ENCODE measurements at regions of chr14 and their contacts with region 1.

Region 1: DNA sequence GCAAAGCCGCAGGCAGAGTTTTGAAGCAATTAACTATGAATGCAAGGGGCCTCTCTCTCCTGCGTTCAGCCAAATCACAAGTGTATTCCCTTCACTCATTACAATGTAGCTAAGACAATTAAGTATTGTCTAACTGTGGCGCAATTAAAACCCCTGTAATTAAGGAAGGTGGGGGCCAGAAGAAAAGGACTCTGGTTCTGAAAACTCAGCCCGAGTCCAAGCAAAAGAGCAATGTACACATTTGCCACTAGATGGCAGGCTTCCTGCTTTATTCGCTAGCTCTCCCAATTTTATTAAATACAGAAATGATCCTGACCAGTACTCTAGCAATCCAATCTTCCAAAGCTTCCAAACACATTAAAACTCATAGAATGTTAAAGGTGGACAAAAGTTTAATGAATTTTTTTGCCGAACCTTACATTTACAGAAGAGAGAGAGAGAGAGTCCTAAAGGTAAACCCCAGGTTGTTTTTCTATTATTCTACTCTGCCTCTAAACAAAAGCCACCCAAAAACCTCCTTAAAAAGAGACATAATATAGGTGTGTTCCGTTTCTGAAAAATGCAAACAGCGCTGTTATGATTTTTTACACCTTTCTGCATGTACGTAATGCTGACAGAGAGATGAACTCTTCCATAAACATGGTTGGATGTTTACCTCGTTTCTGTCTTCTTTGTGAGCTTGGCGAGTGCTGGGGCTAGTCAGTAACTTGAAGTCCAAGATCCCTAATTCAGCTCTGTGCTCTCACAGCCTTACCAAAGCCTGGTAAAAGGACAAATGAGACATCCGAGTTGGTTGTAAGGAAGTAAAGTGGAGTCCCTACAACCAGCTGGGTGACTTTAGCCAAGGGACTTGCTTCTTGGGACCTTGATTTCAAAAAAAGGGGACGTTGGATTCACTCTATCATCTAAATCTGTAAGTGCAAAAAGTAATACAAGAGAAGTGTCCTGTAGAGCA is 50.9 kb upstream of the VASH1 start:
- DNase-seq: peak; percentile 63
- H3K4me3 ChIP-seq: no peak overlapping the region
- H3K27ac ChIP-seq: no peak overlapping the region
- H3K4me1 ChIP-seq: no peaks in the 10 kb centered on the region
- H3K27me3 ChIP-seq: no peaks in the 10 kb centered on the region
- CTCF ChIP-seq: peak; percentile 71 to 72
- POLR2A ChIP-seq: no peak

Region 2: GRCh38 chr14:76720382-76720813 is 10.1 kb after region 1 on chr14:
- CTCF ChIA-PET with region 1: interaction called, 36 read pairs
- POLR2A ChIA-PET with region 1: no interaction called
- dilution Hi-C with region 1: no loop called
- intact Hi-C with region 1: no loop called
- DNase-seq: peak; percentile 91
- H3K4me3 ChIP-seq: no peak overlapping the region
- H3K27ac ChIP-seq: peak overlapping the region; percentile 26
- H3K4me1 ChIP-seq: peaks cover 35% of the 10 kb centered on the region
- H3K27me3 ChIP-seq: no peaks in the 10 kb centered on the region
- CTCF ChIP-seq: no peak
- POLR2A ChIP-seq: no peak

Region 3: GRCh38 chr14:76761136-76761959 is 51.0 kb after region 1 on chr14 and contains the start of gene VASH1:
- CTCF ChIA-PET with region 1: interaction called, 15 read pairs
- POLR2A ChIA-PET with region 1: no interaction called
- dilution Hi-C with region 1: no loop called
- intact Hi-C with region 1: loop called (anchors 1 kb)
- DNase-seq: peak; percentile 75
- H3K4me3 ChIP-seq: peak within 1 kb of the TSS; percentile 81 to 98 (median 90)
- H3K27ac ChIP-seq: peak within 1 kb of the TSS; percentile 8
- H3K4me1 ChIP-seq: peaks cover 30% of the 10 kb centered on the region
- H3K27me3 ChIP-seq: peaks cover 2 to 6% of the 10 kb centered on the region in 2 experiments
- CTCF ChIP-seq: no peak
- POLR2A ChIP-seq: peak; percentile 82
- total RNA-seq, gene VASH1: 168 and 246 TPM in 2 replicates

Region 4: GRCh38 chr14:76773188-76773885 is 63.0 kb after region 1 on chr14:
- CTCF ChIA-PET with region 1: interaction called, 557 read pairs
- POLR2A ChIA-PET with region 1: no interaction called
- dilution Hi-C with region 1: no loop called
- intact Hi-C with region 1: loop called (anchors 1 kb)
- DNase-seq: peak; percentile 89
- H3K4me3 ChIP-seq: no peak overlapping the region
- H3K27ac ChIP-seq: peak overlapping the region; percentile 92
- H3K4me1 ChIP-seq: peaks cover 27% of the 10 kb centered on the region
- H3K27me3 ChIP-seq: no peaks in the 10 kb centered on the region
- CTCF ChIP-seq: no peak
- POLR2A ChIP-seq: no peak

Region 5: DNA sequence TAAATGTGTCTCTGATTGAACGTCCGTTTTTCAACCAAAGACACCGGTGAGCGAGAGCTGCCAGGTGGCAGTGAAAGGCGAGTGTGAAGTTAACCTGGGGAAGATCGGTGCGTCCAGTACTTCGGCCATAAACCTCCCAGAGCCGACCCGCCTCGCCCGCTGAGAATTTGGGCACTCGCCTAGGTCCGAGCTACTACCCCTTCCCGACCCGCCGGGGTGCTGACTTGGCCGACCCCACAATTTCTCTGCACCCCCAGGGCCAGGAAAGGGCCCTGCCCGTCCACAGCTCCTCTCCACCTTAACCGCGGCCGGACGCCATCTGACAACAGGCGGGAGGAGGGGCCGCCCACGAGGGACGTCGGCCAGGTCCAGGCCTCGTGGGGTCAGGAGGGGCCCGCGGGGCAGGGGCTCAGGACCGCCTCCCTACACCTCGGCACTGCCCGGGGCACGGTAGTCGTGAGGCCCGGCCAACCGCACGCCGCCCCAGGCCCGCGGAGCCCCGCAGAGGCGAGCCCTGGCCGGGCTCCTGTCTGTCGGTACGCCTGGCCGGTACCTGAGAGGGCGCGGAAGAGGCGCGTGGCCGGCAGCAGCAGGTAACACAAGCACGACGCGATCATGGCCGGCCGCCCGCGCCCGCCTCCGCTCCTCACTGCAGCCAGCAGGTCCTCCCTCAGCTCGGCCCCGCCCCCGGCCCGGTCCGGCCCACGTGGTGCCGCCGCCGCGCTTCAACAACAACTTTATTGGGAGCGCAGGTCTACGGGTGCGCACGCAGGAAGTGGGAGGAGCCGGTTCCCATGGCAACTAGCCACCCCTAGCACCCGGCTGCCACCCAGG is 102.1 kb after region 1 on chr14 and contains the start of gene ANGEL1:
- CTCF ChIA-PET with region 1: interaction called, 73 read pairs
- POLR2A ChIA-PET with region 1: no interaction called
- dilution Hi-C with region 1: no loop called
- intact Hi-C with region 1: loop called (anchors 1 kb)
- DNase-seq: peak; percentile 90
- H3K4me3 ChIP-seq: peak within 1 kb of the TSS; percentile 72 to 85 (median 75)
- H3K27ac ChIP-seq: peak within 1 kb of the TSS; percentile 34
- H3K4me1 ChIP-seq: peaks cover 14% of the 10 kb centered on the region
- H3K27me3 ChIP-seq: peaks cover 7 to 8% of the 10 kb centered on the region in 2 experiments
- CTCF ChIP-seq: no peak
- POLR2A ChIP-seq: peak; percentile 87
- total RNA-seq, gene ANGEL1: 14.8 and 18.4 TPM in 2 replicates

Region 6: DNA sequence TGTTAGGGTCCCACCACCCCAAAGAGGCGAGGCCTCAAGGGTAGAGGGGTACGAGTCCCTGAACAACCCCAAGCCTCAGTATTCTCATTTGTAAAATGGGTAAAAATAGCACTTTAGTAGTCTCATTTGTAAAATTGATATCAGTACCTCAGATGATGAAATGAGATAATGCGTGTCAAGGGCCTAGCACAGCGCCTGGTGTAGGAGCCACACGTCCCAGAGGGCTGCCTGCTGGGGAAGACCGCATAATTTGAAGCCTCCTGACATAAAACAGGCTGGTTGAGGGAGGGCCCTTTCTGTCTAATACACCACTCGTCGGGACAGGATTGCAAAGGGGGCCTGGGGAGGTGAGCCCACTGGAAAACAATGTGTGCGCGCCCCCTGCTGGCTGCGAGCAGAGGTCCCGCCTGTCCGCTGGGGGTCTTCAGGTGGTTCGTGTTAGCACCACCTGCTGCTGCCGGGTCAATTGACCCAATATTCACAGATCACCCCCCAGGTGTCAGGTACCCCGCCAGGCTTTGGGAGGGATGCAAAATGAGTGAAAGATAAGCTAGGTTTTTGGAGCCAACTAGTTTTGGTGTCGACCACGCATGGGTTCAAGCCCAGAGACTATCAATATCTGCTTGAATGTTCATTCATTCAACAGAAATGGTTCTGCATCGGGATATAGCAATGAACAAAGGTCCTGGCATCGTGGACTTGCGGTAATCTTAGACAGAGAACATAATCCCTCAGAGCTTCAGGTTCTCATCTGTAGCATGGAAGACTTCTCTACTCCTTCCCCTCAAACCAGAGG is 342.9 kb after region 1 on chr14:
- CTCF ChIA-PET with region 1: no interaction called
- POLR2A ChIA-PET with region 1: no interaction called
- dilution Hi-C with region 1: no loop called
- intact Hi-C with region 1: loop called (anchors 10 kb)
- DNase-seq: peak; percentile 81
- H3K4me3 ChIP-seq: no peak overlapping the region
- H3K27ac ChIP-seq: peak overlapping the region; percentile 6
- H3K4me1 ChIP-seq: peaks cover 11% of the 10 kb centered on the region
- H3K27me3 ChIP-seq: no peaks in the 10 kb centered on the region
- CTCF ChIP-seq: peak; percentile 95 to 96
- POLR2A ChIP-seq: no peak

Measured in endothelial cell of umbilical vein (primary cell).